Heart right ventricle (tissue), 16 donors: ENCODE measurements at regions of chrX and their contacts with region 1.

Region 1: GRCh38 chrX:11533211-11533651 is 132.5 kb downstream of the ARHGAP6 start:
- DNase-seq: peak in 1 of 2 donors; percentile 3
- ATAC-seq: peak; percentile 68 to 91 (median 86)
- H3K4me3 ChIP-seq: no peak overlapping the region
- H3K27ac ChIP-seq: peak overlapping the region in 1 of 10 donors; percentile 35
- H3K4me1 ChIP-seq: no peaks in the 10 kb centered on the region
- H3K27me3 ChIP-seq: peaks cover 0 to 14% (median 0%) of the 10 kb centered on the region in 7 donors
- CTCF ChIP-seq: peak; percentile 51 to 89 (median 81)

Region 2: GRCh38 chrX:11040405-11040804 is 492.8 kb before region 1 on chrX:
- intact Hi-C with region 1: no loop called
- DNase-seq: no peak
- ATAC-seq: no peak
- H3K4me3 ChIP-seq: no peak overlapping the region
- H3K27ac ChIP-seq: no peak overlapping the region
- H3K4me1 ChIP-seq: no peaks in the 10 kb centered on the region
- H3K27me3 ChIP-seq: no peaks in the 10 kb centered on the region
- CTCF ChIP-seq: no peak

Region 3: GRCh38 chrX:11151799-11152559 is 381.3 kb before region 1 on chrX:
- intact Hi-C with region 1: loop called in 6 of 10 experiments (anchors 5 to 10 kb)
- DNase-seq: no peak
- ATAC-seq: no peak
- H3K4me3 ChIP-seq: no peak overlapping the region
- H3K27ac ChIP-seq: no peak overlapping the region
- H3K4me1 ChIP-seq: no peaks in the 10 kb centered on the region
- H3K27me3 ChIP-seq: peaks cover 0 to 7% (median 0%) of the 10 kb centered on the region in 7 donors
- CTCF ChIP-seq: no peak

Region 4: DNA sequence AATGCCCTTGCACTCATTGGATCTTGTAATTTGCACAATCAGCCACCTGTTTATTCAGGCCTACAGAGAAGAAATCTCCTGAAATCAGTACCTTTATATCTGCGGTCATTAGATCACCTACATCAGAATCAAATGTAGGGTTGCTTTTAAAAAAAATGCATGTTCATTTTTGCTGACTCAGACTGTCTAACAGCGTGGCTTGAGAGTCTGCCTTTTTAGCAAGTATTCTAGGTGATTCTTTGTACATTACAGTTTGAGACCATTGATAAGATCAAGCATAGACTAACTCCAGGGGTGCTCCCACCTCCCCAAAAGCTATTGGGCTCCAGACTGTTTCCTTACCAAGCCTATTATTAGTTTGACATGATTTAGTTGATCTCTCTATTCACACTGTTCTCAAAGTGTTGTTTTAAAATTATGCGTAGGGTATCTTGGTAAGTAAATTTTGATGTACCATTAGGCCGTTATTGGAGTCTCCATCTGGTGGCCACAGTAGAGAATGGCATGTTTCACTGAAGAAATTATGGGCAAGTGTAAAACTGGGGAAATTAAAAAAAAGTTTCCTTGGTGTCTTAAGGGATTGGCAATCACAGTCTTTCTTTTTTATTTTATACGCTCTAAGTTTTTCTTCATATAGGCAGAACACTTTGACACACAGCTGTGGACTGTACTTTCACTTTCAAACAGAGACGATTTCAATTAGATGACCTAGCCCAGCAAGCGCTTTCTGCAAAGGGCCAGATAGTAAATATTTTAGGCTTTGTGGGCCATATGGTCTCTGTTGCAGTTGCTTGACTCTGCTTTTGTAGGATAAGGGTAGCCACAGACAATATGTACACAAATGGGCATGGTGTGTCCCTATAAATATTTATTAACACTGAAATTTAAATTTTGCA is 191.1 kb after region 1 on chrX:
- intact Hi-C with region 1: loop called (anchors 2 to 10 kb)
- DNase-seq: peak in 1 of 2 donors; percentile 4
- ATAC-seq: no peak
- H3K4me3 ChIP-seq: no peak overlapping the region
- H3K27ac ChIP-seq: no peak overlapping the region
- H3K4me1 ChIP-seq: no peaks in the 10 kb centered on the region
- H3K27me3 ChIP-seq: peaks cover 0 to 11% (median 0%) of the 10 kb centered on the region in 7 donors
- CTCF ChIP-seq: peak; percentile 42 to 73 (median 64)

Region 5: GRCh38 chrX:11770320-11770719 is 237.1 kb after region 1 on chrX:
- intact Hi-C with region 1: loop called (anchors 2 to 5 kb)
- DNase-seq: no peak
- ATAC-seq: peak in 7 of 8 donors; percentile 25 to 76 (median 63)
- H3K4me3 ChIP-seq: no peak overlapping the region
- H3K27ac ChIP-seq: no peak overlapping the region
- H3K4me1 ChIP-seq: peaks cover 0 to 7% (median 0%) of the 10 kb centered on the region in 9 donors
- H3K27me3 ChIP-seq: no peaks in the 10 kb centered on the region
- CTCF ChIP-seq: peak; percentile 47 to 88 (median 77)

Region 6: GRCh38 chrX:12874581-12874980 is 1341.3 kb after region 1 on chrX:
- intact Hi-C with region 1: no loop called
- DNase-seq: no peak
- ATAC-seq: no peak
- H3K4me3 ChIP-seq: no peak overlapping the region
- H3K27ac ChIP-seq: no peak overlapping the region
- H3K4me1 ChIP-seq: peaks cover 0 to 2% (median 0%) of the 10 kb centered on the region in 9 donors
- H3K27me3 ChIP-seq: peaks cover 0 to 31% (median 0%) of the 10 kb centered on the region in 7 donors
- CTCF ChIP-seq: no peak